CD4-positive, alpha-beta T cell (primary cell): ENCODE measurements at regions of chr16 and their contacts with region 1.

Region 1: DNA sequence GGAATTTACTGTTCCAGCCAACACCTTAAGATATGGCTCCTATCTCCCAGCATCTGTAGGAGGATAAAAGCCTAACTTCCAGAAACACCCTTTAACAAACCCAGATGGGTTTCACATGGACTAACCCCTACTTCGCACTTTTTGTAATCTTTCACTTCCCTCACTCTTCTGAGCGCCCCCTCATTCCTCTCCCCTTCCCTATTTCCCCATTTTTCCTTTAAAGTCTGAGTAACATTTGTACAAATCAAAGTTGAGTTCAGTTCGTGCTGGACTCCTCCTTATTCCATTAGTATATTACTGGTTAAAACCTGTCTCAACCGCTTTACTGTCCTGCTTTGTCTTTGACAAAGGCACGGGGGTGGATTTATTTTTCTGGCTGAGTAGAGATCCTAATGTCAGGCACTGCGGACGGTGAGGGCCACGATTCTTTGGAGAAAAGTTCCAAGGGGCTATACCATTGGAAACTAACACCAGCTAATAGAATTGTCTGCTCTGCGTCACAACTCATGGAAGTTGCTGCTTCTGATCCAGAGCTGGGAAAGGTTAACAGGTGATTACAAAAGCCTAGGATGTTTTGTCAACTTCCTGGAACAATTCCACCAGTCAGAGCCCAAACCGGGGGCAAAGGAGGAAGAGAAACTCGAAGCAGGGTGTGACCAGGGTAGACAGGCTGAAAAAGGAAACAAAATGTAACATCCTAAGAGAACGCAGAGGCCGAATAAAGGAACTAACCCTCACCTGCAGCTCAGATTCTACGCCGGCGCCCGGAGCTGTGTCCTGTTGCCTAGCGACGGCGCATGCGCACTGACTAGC is 12.5 kb downstream of the TAT start:
- DNase-seq: peak in 1 of 14 experiments; percentile 0
- ATAC-seq: no peak
- H3K4me3 ChIP-seq: peak overlapping the region; percentile 67
- H3K4me3 Mint-ChIP-seq: peak overlapping the region; percentile 96
- H3K27ac ChIP-seq: peak overlapping the region; percentile 62 to 75
- H3K27ac Mint-ChIP-seq: peak overlapping the region; percentile 99
- H3K4me1 ChIP-seq: peaks cover 20% of the 10 kb centered on the region
- H3K4me1 Mint-ChIP-seq: peaks cover 22% of the 10 kb centered on the region
- H3K27me3 ChIP-seq: no peaks in the 10 kb centered on the region
- H3K27me3 Mint-ChIP-seq: no peaks in the 10 kb centered on the region
- CTCF ChIP-seq: no peak

Region 2: DNA sequence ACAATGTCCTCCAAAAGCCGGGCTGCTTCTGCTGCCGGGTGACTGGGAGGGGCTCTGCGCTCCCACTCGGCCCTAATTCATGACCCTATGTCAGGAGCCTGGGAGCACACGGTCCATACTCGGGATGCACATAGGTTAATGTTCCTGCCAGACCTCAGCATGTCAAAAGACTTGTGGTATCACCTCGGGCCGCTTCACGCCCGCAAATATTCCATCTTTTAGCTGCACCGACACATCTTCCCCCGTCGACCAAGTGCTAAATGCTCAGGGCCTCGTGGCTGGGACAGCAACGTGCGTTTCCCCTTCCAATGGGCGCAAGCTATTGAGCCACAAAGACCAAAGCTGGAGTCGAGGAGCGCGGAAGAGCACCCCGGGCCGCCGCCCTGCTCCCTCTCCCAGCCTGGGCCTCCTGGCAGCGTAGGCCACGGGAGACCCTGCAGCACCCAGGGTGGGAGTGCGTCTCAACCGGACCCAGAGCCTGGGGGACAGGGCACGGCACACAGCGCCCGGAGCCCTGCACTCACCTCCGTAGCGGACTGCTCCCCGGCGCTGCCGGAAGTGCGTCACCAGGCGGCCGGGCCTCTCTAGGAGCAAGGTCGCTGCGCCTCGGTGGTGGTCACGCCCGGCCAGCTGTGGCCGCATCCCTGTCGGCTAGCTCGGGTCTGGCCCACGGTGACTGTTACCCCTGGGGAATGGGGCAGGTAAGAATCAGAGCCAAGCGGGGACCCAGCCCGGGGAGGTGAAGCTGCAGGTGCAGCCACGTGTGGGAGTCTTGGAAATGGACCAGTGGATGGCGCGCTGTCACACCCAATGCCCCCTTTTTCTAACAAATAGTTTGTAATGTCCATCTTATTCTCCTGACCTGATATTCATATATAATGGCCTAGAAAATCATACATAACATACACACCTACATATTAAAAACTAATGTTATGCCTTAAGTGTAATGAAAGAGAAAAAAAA is 102.4 kb before region 1 on chr16 and contains the start of gene ZNF23:
- CTCF ChIA-PET with region 1: interaction called, 3 read pairs
- POLR2A ChIA-PET with region 1: interaction called, 9 read pairs
- intact Hi-C with region 1: loop called in 1 of 2 experiments (anchors 5 kb)
- DNase-seq: peak; percentile 53 to 87 (median 72)
- ATAC-seq: peak; percentile 95
- H3K4me3 ChIP-seq: peak within 1 kb of the TSS; percentile 96
- H3K4me3 Mint-ChIP-seq: peak within 1 kb of the TSS; percentile 94
- H3K27ac ChIP-seq: peak within 1 kb of the TSS; percentile 68 to 79
- H3K27ac Mint-ChIP-seq: peak within 1 kb of the TSS; percentile 85
- H3K4me1 ChIP-seq: peaks cover 11% of the 10 kb centered on the region
- H3K4me1 Mint-ChIP-seq: peaks cover 34% of the 10 kb centered on the region
- H3K27me3 ChIP-seq: no peaks in the 10 kb centered on the region
- H3K27me3 Mint-ChIP-seq: no peaks in the 10 kb centered on the region
- CTCF ChIP-seq: peak; percentile 54
- total RNA-seq, gene ZNF23: 7.0 to 8.4 TPM

Region 3: GRCh38 chr16:71610936-71611871 is 46.8 kb after region 1 on chr16:
- CTCF ChIA-PET with region 1: interaction called, 65 read pairs
- POLR2A ChIA-PET with region 1: interaction called, 23 read pairs
- intact Hi-C with region 1: loop called (anchors 1 kb)
- DNase-seq: peak; percentile 58 to 86 (median 72)
- ATAC-seq: peak; percentile 93
- H3K4me3 ChIP-seq: no peak overlapping the region
- H3K4me3 Mint-ChIP-seq: no peak overlapping the region
- H3K27ac ChIP-seq: no peak overlapping the region
- H3K27ac Mint-ChIP-seq: no peak overlapping the region
- H3K4me1 ChIP-seq: peaks cover 6% of the 10 kb centered on the region
- H3K4me1 Mint-ChIP-seq: no peaks in the 10 kb centered on the region
- H3K27me3 ChIP-seq: peaks cover 4 to 5% of the 10 kb centered on the region in 2 experiments
- H3K27me3 Mint-ChIP-seq: peaks cover 34% of the 10 kb centered on the region
- CTCF ChIP-seq: peak; percentile 92

Region 4: DNA sequence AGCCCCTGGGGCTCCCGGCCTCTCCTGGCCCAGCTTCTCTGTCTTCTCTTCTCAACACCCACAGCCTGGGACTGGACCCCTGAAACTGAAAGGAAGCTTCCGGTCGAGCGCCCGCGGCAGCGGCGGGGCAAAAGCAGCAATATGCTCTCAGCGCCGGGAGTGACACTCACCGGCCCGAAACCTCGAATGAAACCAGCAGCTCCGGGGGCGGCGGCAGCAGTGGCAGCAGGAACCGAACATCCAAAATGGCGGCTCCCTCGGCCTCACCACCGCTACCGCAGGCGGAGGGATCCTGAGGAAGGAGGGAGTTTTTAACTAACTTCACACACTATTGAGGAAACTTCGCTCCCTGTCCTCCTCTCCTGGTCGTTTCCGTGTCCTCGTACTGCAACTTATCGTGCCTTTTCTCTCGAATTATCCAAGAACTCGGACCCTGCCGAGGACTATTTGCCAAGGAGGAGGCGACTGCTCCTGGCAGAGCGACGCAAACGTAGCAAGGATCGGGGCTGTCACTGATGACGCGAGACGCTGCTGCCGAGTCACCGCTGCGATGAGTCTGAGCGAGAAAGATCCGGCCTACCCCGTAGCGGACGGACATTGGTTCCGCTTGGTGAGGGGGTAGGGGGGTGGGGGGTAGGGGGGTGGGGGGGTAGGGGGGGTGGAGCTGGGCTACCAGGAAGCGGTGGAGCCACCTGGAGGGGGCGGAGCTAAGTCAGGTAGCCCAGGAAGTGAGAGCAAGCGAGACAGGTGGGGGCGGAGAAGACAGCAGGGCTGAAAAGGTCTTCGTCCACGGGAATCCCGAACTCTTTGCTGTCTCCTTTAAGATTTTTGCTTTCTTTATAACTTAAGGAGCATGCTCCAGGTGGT is 244.5 kb after region 1 on chr16 and contains the start of gene AP1G1:
- CTCF ChIA-PET with region 1: no interaction called
- POLR2A ChIA-PET with region 1: interaction called, 10 read pairs
- intact Hi-C with region 1: loop called in 1 of 2 experiments (anchors 10 kb)
- DNase-seq: peak; percentile 84 to 99 (median 90)
- ATAC-seq: peak; percentile 87
- H3K4me3 ChIP-seq: peak within 1 kb of the TSS; percentile 91
- H3K4me3 Mint-ChIP-seq: peak within 1 kb of the TSS; percentile 100
- H3K27ac ChIP-seq: peak within 1 kb of the TSS; percentile 98 to 99
- H3K27ac Mint-ChIP-seq: peak within 1 kb of the TSS; percentile 100
- H3K4me1 ChIP-seq: peaks cover 43% of the 10 kb centered on the region
- H3K4me1 Mint-ChIP-seq: peaks cover 47% of the 10 kb centered on the region
- H3K27me3 ChIP-seq: no peaks in the 10 kb centered on the region
- H3K27me3 Mint-ChIP-seq: no peaks in the 10 kb centered on the region
- CTCF ChIP-seq: no peak
- total RNA-seq, gene AP1G1: 171 to 175 TPM

Region 5: GRCh38 chr16:71961066-71962039 is 397.0 kb after region 1 on chr16:
- CTCF ChIA-PET with region 1: no interaction called
- POLR2A ChIA-PET with region 1: no interaction called
- intact Hi-C with region 1: loop called in 1 of 2 experiments (anchors 5 kb)
- DNase-seq: peak; percentile 67 to 90 (median 78)
- ATAC-seq: peak; percentile 91
- H3K4me3 ChIP-seq: no peak overlapping the region
- H3K4me3 Mint-ChIP-seq: no peak overlapping the region
- H3K27ac ChIP-seq: no peak overlapping the region
- H3K27ac Mint-ChIP-seq: no peak overlapping the region
- H3K4me1 ChIP-seq: peaks cover 6% of the 10 kb centered on the region
- H3K4me1 Mint-ChIP-seq: peaks cover 11% of the 10 kb centered on the region
- H3K27me3 ChIP-seq: no peaks in the 10 kb centered on the region
- H3K27me3 Mint-ChIP-seq: no peaks in the 10 kb centered on the region
- CTCF ChIP-seq: peak; percentile 80

Region 6: GRCh38 chr16:72093448-72094265 is 529.3 kb after region 1 on chr16 and contains the starts of genes DHX38 and TXNL4B:
- CTCF ChIA-PET with region 1: interaction called, 4 read pairs
- POLR2A ChIA-PET with region 1: interaction called, 9 read pairs
- intact Hi-C with region 1: loop called (anchors 2 to 10 kb)
- DNase-seq: peak; percentile 79 to 98 (median 86)
- ATAC-seq: peak; percentile 97
- H3K4me3 ChIP-seq: peak within 1 kb of the TSS; percentile 88
- H3K4me3 Mint-ChIP-seq: peak within 1 kb of the TSS; percentile 95
- H3K27ac ChIP-seq: peak within 1 kb of the TSS; percentile 91
- H3K27ac Mint-ChIP-seq: peak within 1 kb of the TSS; percentile 94
- H3K4me1 ChIP-seq: peaks cover 27% of the 10 kb centered on the region
- H3K4me1 Mint-ChIP-seq: peaks cover 71% of the 10 kb centered on the region
- H3K27me3 ChIP-seq: no peaks in the 10 kb centered on the region
- H3K27me3 Mint-ChIP-seq: no peaks in the 10 kb centered on the region
- CTCF ChIP-seq: no peak
- total RNA-seq, gene DHX38: 103 to 109 TPM
- total RNA-seq, gene TXNL4B: 11.5 to 15.0 TPM